ENCODE measurements at regions of chr17 and their contacts with region 1.

Region 1: DNA sequence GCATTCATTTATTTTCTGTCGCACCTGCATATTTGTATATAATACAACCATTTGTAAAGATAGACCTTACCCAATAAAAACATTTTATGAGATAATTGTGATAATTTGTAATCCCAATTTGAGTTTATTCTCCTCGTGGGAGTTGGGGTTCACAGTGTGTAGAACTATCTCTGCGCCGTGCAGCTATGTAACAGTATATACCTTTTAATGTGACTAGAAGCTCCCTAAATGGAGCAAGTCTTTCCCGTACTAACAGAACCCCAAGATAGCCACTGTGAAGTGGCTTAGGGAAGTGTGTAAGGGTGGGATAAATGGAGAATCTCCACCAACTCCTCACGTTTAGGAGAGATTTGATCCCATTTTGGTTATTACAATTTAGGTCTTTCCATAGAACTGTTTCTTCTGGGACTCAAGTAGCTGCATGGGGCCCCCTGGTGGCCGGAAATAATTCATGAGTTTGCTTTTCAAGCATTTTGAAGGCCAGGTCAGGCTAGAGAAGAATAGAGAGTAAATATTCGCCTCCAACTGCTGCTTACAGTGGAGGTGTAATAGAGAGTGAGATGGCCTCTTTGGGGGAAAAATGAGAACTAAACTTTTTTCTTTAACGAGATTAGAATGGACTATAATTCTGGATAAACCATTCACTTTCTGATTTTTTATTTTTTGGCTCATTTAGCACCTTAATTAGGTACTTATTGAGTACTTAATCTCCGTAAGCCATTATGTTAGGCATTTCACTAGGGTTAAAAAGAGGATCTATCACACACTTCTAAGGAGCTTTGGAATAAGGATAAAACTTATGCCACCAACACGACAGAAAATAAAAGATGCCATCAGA is 4.5 kb downstream of the TMEM100 start:
- DNase-seq: peak; percentile 87
- H3K4me3 ChIP-seq: no peak overlapping the region
- H3K27ac ChIP-seq: no peak overlapping the region
- H3K4me1 ChIP-seq: peaks cover 25% of the 10 kb centered on the region
- H3K27me3 ChIP-seq: no peaks in the 10 kb centered on the region
- CTCF ChIP-seq: peak; percentile 89

Region 2: GRCh38 chr17:55513885-55514591 is 204.1 kb before region 1 on chr17:
- CTCF ChIA-PET with region 1: no interaction called
- POLR2A ChIA-PET with region 1: no interaction called
- intact Hi-C with region 1: no loop called
- DNase-seq: peak; percentile 86
- H3K4me3 ChIP-seq: no peak overlapping the region
- H3K27ac ChIP-seq: no peak overlapping the region
- H3K4me1 ChIP-seq: no peaks in the 10 kb centered on the region
- H3K27me3 ChIP-seq: peaks cover 9% of the 10 kb centered on the region
- CTCF ChIP-seq: peak; percentile 96

Region 3: DNA sequence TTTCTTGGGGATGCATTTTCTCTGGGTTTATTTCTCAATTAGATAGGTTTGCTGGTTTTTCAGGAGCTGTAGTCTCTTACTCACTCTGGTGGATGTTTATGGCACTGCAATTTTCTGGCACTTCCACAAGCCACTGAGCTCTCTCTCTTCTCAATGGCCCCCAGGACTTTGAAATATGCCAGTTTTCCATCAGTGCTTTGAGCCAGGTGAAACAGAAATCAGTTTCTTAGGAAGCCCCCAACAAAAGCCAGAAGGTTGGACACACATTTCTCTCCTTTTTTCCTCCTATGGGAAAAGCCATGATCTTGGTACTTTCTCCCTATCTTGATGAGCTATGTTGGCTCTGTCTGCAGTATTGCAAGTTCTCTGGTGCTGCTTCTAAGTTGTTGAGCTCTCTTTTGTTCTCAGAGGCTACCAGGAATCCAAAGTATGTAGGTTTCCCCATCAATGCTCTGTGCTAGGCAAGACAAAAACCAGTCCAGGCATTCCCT is 116.2 kb before region 1 on chr17:
- CTCF ChIA-PET with region 1: interaction called, 12 read pairs
- POLR2A ChIA-PET with region 1: no interaction called
- intact Hi-C with region 1: loop called (anchors 5 kb)
- DNase-seq: peak; percentile 68
- H3K4me3 ChIP-seq: no peak overlapping the region
- H3K27ac ChIP-seq: no peak overlapping the region
- H3K4me1 ChIP-seq: no peaks in the 10 kb centered on the region
- H3K27me3 ChIP-seq: peaks cover 37% of the 10 kb centered on the region
- CTCF ChIP-seq: peak; percentile 81

Region 4: DNA sequence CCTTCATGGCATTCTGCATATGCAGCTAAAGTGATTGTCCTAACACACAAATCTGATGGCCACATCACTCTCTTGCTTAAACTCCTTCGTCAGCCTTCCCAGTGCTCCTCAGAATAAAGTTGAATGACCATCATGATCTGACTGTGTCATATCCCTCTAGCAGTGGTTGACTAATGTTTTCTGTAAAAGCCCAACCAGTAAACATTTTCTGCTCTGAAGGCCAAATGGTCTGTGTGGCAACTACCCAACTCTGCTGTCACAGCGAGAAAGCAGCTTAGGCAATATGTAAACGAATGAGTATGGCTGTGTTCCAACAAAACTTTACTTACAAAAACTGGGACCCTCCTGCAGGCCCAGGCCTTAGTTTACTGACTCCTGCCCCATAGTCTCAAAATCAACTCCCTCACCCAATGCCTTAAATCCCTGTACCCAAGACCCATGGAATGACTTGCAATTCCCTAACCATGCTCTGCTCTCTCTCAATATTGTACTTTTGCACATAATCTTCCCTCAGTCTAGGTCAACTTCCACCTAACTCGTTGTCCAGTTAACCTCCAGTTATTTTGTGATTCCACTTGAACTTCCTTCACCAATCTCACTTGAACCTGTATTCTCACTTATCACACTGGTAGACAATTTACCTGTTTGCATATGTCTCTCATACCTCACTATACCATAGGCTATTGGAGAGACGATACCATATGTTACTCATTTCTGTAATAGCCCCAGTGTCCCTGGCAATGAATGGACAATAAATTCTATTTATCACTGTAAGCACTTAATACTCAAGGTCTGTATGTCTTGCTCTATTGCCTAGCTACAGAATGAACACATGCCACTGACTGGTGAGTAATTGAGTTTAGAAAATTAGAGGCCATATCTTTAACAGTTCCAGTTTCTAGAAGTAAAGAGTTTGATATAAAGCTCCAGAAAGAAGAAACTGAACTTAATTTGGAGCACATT is 24.6 kb before region 1 on chr17:
- CTCF ChIA-PET with region 1: interaction called, 13 read pairs
- POLR2A ChIA-PET with region 1: no interaction called
- intact Hi-C with region 1: no loop called
- DNase-seq: peak; percentile 54
- H3K4me3 ChIP-seq: no peak overlapping the region
- H3K27ac ChIP-seq: peak overlapping the region; percentile 83
- H3K4me1 ChIP-seq: peaks cover 71% of the 10 kb centered on the region
- H3K27me3 ChIP-seq: no peaks in the 10 kb centered on the region
- CTCF ChIP-seq: no peak

Measured in A673 (cell line).